ENCODE measurements at regions of chr2 and their contacts with region 1.

Region 1: GRCh38 chr2:197356136-197356535 is 45.6 kb upstream of the ANKRD44 start:
- DNase-seq: peak; percentile 12
- ATAC-seq: peak; percentile 37
- H3K4me3 Mint-ChIP-seq: peak overlapping the region; percentile 1
- H3K27ac Mint-ChIP-seq: no peak overlapping the region
- H3K4me1 Mint-ChIP-seq: peaks cover 36% of the 10 kb centered on the region
- H3K27me3 Mint-ChIP-seq: no peaks in the 10 kb centered on the region
- CTCF ChIP-seq: no peak

Region 2: GRCh38 chr2:197322724-197323720 is 33.1 kb before region 1 on chr2:
- CTCF ChIA-PET with region 1: interaction called, 5 read pairs
- POLR2A ChIA-PET with region 1: interaction called, 5 read pairs
- intact Hi-C with region 1: loop called (anchors 5 kb)
- DNase-seq: peak; percentile 37
- ATAC-seq: peak; percentile 54
- H3K4me3 Mint-ChIP-seq: peak overlapping the region; percentile 61
- H3K27ac Mint-ChIP-seq: peak overlapping the region; percentile 95
- H3K4me1 Mint-ChIP-seq: peaks cover 72% of the 10 kb centered on the region
- H3K27me3 Mint-ChIP-seq: no peaks in the 10 kb centered on the region
- CTCF ChIP-seq: no peak